Left cardiac atrium (tissue), 4 donors: ENCODE measurements at regions of chr2 and their contacts with region 1.

Region 1: GRCh38 chr2:224909885-224910573 is 132.2 kb downstream of the DOCK10 start:
- DNase-seq: peak; percentile 49
- ATAC-seq: peak; percentile 88 to 96

Region 2: GRCh38 chr2:224395620-224396390 is 514.2 kb before region 1 on chr2:
- intact Hi-C with region 1: no loop called
- DNase-seq: no peak
- ATAC-seq: no peak

Region 3: DNA sequence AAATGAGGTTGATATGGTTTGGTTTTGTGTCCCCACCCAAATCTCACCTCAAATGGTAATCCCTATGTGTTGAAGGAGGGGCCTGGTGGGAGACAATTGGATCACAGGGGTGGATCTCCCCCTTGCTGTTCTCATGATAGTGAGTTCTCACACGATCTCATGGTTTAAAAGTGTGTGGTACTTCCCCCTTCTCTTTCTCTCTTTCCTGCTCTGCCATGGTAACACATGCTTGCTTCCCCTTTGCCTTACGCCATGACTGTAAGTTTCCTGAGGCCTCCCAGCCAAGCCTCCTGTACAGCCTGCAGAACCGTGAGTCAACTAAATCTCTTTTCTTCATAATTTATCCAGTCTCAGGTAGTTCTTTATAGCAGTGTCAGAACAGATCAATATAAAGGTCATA is 483.4 kb before region 1 on chr2:
- intact Hi-C with region 1: no loop called
- DNase-seq: no peak
- ATAC-seq: no peak

Region 4: DNA sequence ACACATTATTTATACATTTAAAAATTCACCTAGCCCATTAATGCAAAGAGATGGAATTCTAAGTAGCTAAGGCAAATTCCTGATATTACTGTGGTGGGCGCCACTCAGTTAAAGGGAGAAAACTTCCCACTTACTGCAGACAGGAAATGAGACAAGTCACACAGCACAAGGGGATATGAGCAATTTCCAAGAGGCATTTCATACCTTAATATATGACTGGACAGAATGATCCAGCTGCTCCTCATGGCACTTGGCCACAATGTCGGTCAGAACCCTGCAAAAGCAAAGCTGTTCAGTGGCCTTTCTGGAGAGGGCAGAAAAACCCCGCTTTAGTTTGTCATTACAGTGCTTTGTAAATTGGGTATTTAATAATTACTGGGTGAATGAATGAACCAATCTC is 72.5 kb before region 1 on chr2:
- intact Hi-C with region 1: loop called in 1 of 2 experiments (anchors 2 kb)
- DNase-seq: no peak
- ATAC-seq: peak in 1 of 2 donors; percentile 85